Dorsolateral prefrontal cortex (tissue), 120 donors: ENCODE measurements at regions of chr7 and their contacts with region 1.

Region 1: DNA sequence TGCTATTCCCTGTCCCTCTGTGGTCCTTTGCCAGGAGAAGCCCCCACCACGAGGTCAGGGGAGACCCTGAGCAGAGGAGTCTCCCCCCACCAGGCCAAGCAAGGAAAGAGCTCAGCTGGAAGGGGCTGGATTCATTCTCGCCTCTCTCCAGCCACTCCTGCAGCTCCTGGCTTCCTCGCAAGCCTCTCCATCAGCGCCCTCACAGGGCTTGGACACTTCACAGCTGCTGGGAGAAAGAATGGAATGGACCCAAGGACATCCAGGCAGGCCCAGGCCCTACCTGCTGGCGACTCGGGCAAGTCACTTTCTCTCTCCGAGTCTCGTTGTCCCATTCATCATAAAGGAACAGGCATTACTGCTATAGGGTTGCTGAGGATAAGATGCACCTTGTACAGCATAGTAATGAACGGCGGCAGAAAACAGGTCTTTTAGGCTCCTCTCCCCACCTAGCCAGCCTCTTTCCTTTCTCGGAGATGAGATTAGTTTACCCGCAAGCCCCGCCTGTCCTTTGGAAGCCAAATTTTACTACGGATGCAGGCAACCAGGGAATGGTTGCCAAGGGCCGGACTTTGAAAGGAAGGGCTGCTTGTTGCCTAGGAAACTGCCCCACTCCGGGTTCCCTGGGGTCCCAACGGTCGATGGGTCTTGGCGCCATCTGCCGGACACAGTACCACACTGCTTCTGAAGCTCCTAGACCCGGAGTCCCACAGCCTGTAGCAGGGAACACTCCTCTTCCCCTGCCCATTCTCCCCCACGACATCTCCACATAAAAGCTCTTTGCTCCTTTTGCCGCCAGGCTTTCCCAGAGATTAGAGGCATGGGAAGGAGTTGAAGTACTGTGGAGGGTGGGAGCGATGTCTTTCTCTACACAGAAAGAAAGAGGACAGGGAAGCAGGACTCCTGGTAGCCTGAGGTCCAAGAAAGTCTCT is 22.3 kb downstream of the IMPDH1 start:
- DNase-seq: peak; percentile 78 to 95 (median 86)
- H3K4me3 ChIP-seq: peak overlapping the region in 41 of 59 donors; percentile 3 to 53 (median 33)
- H3K27ac ChIP-seq: peak overlapping the region in 4 of 59 donors; percentile 5 to 46 (median 27)
- H3K27me3 ChIP-seq: no peaks in the 10 kb centered on the region
- CTCF ChIP-seq: peak; percentile 38 to 94 (median 88)

Region 2: GRCh38 chr7:128347647-128348097 is 39.8 kb before region 1 on chr7:
- intact Hi-C with region 1: loop called (anchors 1 to 2 kb)
- DNase-seq: peak in 8 of 10 donors; percentile 22 to 76 (median 64)
- H3K4me3 ChIP-seq: no peak overlapping the region
- H3K27ac ChIP-seq: peak overlapping the region in 7 of 59 donors; percentile 2 to 66 (median 28)
- H3K27me3 ChIP-seq: peaks cover 0 to 17% (median 0%) of the 10 kb centered on the region in 45 donors
- CTCF ChIP-seq: peak; percentile 44 to 82 (median 69)

Region 3: DNA sequence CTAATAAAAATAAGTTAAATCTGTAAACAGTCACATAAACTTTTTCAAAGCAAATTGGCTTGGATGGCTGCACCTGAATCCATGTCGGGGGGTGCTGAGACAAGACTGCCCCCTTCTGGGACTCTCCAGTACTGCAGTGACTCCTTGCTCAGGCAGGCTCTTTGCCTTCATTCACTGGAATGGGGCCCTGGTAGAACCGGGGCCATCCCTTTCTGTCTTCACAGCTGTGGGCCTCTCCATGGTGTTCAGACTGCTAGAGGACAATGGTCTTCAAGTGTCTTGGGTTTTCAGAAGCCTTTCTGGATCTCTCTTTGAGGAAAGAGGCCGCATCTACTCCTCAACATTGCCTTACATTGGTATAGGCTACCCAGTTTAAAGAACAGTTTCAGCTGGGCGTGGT is 38.4 kb after region 1 on chr7:
- intact Hi-C with region 1: no loop called
- DNase-seq: peak in 8 of 10 donors; percentile 28 to 85 (median 72)
- H3K4me3 ChIP-seq: no peak overlapping the region
- H3K27ac ChIP-seq: no peak overlapping the region
- H3K27me3 ChIP-seq: no peaks in the 10 kb centered on the region
- CTCF ChIP-seq: peak; percentile 64 to 96 (median 90)

Region 4: DNA sequence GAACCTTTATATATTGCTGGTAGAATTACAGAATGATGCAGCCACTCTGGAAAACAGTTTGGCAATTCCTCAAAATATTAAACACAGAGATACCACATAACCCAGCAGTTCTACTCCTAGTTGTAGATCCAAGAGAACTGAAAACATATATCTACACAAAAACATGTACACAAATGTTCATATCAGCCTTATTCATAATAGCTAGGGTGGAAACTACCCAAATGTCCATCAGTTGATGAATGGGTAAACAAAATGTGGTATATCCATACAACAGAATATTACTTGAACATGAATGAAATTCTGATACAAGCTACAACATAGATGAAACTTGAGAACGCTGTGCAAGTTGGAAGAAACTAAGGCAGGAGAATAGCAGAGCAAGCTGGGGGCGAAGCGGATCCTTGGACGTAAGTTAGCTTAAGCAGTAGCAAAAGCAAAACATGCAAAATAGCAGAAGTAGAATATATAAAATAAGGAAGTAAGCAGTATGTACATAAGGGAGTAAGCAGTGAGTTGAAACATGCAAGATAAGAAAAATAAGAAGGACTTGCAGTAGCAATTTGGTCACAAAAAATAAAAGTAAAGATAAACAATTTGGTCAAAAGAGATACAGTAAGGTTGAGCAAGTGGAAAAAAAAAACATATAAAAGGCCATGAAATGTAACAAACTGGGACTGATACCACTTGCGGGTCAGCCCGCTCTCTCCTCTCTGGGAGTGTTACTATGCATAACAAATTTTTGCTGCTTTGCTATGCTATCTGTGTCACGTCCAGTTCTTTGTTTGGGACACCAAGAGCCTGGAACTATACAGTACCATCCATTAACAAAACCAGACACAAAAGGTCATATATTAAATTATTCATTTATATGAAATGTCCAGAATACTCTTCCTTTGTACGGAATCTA is 50.2 kb after region 1 on chr7:
- intact Hi-C with region 1: no loop called
- DNase-seq: no peak
- H3K4me3 ChIP-seq: no peak overlapping the region
- H3K27ac ChIP-seq: no peak overlapping the region
- H3K27me3 ChIP-seq: no peaks in the 10 kb centered on the region
- CTCF ChIP-seq: no peak